ENCODE measurements at regions of chr10 and their contacts with region 1.

Region 1: GRCh38 chr10:24118246-24118645 is 90.7 kb upstream of the KIAA1217 start:
- DNase-seq: peak in 1 of 5 donors; percentile 33
- ATAC-seq: peak; percentile 27 to 74 (median 42)
- H3K4me3 ChIP-seq: peak overlapping the region in 11 of 12 donors; percentile 12 to 49 (median 40)
- H3K27ac ChIP-seq: peak overlapping the region in 11 of 12 donors; percentile 33 to 75 (median 60)
- H3K4me1 ChIP-seq: peaks cover 3 to 26% (median 19%) of the 10 kb centered on the region in 12 donors
- H3K27me3 ChIP-seq: no peaks in the 10 kb centered on the region
- CTCF ChIP-seq: no peak
- POLR2A ChIP-seq: peak in 1 of 2 donors; percentile 20

Region 2: DNA sequence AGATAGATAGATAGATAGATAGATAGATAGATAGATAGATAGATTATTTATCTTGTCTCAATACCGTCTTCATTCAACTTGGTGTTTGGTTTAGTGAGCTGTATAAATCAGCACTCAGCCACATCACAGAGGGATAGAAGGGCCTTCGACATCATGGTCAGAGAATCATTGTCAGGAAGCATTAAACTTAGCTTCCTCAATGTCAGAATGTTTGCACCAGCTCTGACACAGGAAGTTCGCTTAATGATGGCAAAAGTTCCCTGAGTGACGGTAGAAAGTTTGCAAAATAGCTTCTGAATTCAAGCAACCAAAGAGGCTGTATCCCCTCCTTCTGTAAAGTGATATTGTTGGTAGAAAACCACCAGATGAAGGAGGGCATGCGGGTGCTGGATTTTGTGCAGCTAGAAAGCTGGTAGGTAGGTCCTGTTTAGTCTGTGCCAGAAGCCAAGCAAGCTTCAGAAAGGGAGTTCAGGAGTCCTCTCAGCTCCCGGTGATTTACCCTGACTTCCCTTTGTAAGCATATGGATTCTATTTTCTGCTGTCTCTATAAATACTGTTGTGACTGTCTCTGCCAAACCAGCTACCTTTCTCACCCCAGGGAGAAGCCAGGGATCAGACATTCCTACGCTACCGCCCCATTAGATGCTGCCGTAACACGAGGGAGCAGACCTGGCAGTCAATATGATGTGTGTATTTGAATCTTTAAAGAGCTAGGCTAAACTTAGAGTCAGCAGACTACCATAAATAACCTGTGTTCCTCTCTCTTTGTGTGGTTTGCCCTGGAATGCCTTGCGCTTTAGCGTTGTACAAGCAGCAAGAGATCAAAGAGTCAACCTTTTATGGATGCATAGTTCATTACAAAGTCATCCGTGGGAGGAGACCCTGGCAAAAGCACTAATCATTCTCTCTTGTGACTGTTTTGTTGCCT is 109.8 kb before region 1 on chr10:
- intact Hi-C with region 1: loop called in 1 of 10 experiments (anchors 5 kb)
- DNase-seq: peak in 3 of 5 donors; percentile 14 to 25 (median 23)
- ATAC-seq: peak; percentile 84 to 94 (median 94)
- H3K4me3 ChIP-seq: peak overlapping the region in 3 of 12 donors; percentile 8 to 18 (median 10)
- H3K27ac ChIP-seq: peak overlapping the region in 10 of 12 donors; percentile 9 to 79 (median 58)
- H3K4me1 ChIP-seq: peaks cover 0 to 23% (median 10%) of the 10 kb centered on the region in 12 donors
- H3K27me3 ChIP-seq: no peaks in the 10 kb centered on the region
- CTCF ChIP-seq: no peak
- POLR2A ChIP-seq: no peak

Region 3: DNA sequence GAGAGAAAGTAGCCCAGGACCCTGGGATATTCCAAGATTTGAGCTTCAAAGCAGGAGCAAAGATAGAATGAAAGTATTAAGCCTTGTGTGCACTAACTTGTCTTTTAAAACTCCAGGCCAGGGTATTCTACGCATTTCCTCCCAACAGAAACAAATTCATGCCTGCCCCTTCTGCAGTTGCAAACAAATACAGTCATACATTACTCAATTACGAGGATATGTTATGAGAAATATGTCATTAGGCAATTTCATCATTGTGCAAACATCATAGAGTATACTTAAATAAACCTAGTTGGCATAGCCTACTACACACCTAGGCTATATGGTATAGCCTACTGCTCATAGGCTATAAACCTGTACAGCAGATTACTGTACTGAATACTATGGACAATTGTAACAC is 63.8 kb before region 1 on chr10:
- intact Hi-C with region 1: no loop called
- DNase-seq: no peak
- ATAC-seq: no peak
- H3K4me3 ChIP-seq: no peak overlapping the region
- H3K27ac ChIP-seq: no peak overlapping the region
- H3K4me1 ChIP-seq: no peaks in the 10 kb centered on the region
- H3K27me3 ChIP-seq: no peaks in the 10 kb centered on the region
- CTCF ChIP-seq: no peak
- POLR2A ChIP-seq: no peak

Measured in heart left ventricle (tissue), 16 donors.